WTC11 (cell line): ENCODE measurements at regions of chr20 and their contacts with region 1.

Region 1: GRCh38 chr20:6525447-6526303 is 241.8 kb upstream of the BMP2 start:
- DNase-seq: peak; percentile 64
- ATAC-seq: peak; percentile 100
- H3K4me3 Mint-ChIP-seq: no peak overlapping the region
- H3K27ac Mint-ChIP-seq: no peak overlapping the region
- H3K4me1 Mint-ChIP-seq: no peaks in the 10 kb centered on the region
- H3K27me3 Mint-ChIP-seq: no peaks in the 10 kb centered on the region
- CTCF ChIP-seq: peak; percentile 23

Region 2: DNA sequence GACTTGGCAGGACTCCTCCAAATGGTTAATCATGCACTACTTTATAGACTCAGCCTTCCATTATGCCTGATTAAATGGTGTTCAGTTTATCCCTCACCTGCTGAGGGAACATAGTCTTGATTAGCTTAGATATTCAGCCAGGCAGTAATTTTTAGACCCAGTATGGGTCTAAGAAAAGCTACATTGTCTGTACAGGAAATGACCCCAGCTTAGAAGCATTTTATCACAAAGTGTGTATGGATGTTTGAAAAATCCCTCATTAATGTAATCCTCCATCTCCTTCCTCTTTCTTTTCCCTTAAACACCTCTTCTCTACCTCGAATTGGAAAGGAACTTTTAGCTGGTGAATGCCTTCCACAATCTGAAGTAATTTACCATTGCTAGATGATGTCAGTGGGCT is 10.4 kb before region 1 on chr20:
- CTCF ChIA-PET with region 1: interaction called, 10 read pairs
- POLR2A ChIA-PET with region 1: no interaction called
- DNase-seq: no peak
- ATAC-seq: no peak
- H3K4me3 Mint-ChIP-seq: no peak overlapping the region
- H3K27ac Mint-ChIP-seq: no peak overlapping the region
- H3K4me1 Mint-ChIP-seq: no peaks in the 10 kb centered on the region
- H3K27me3 Mint-ChIP-seq: no peaks in the 10 kb centered on the region
- CTCF ChIP-seq: no peak

Region 3: DNA sequence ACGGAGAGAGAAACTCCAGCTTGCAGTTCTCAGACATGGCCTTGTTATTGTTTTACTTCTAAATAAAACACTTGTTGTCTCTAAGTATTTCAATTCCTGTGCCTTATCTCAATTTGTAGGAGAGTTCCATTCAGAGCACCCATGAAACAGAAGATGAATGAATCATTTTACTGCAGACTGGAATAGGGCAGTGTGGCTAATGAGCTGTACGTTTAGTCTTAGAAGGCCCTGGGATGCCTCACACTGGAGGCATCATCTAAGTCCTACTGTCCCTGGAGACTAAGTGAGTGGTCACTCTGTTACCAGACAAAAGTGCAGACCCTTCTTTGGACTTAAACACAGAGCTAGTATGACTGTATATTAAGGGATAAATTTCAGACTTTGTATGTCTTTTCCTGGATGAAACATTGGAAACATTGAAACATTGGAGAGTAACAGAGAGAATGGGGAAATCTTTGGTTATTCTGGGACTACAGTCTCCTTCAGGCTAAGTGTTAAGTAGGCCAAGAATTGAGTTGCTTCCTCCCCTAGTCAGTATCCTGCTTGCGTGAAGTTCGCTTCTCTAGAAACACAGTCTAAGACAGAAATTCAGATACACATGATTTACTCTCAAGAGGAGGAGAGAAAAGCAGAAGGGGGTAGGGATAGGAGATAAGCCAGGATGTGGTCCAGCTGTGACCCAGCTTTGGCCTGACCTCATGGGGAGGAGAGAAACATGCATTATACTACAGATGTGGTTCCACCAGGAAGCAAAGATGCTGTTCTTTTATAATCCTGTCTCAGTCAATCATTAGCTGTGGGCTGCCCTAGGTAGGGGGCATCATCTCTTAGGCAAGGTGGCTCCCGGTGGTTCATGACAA is 74.4 kb after region 1 on chr20:
- CTCF ChIA-PET with region 1: no interaction called
- POLR2A ChIA-PET with region 1: no interaction called
- DNase-seq: no peak
- ATAC-seq: no peak
- H3K4me3 Mint-ChIP-seq: no peak overlapping the region
- H3K27ac Mint-ChIP-seq: no peak overlapping the region
- H3K4me1 Mint-ChIP-seq: peaks cover 8% of the 10 kb centered on the region
- H3K27me3 Mint-ChIP-seq: no peaks in the 10 kb centered on the region
- CTCF ChIP-seq: no peak